ENCODE measurements at regions of chr13 and their contacts with region 1.

Region 1: GRCh38 chr13:28297341-28297740 is 159.0 kb downstream of the PAN3 start:
- DNase-seq: no peak
- ATAC-seq: no peak
- H3K4me3 ChIP-seq: no peak overlapping the region
- H3K27ac ChIP-seq: no peak overlapping the region
- H3K4me1 ChIP-seq: no peaks in the 10 kb centered on the region
- H3K27me3 ChIP-seq: no peaks in the 10 kb centered on the region
- CTCF ChIP-seq: no peak
- EP300 ChIP-seq: no peak
- POLR2A ChIP-seq: no peak
- RAD21 ChIP-seq: no peak

Region 2: GRCh38 chr13:28273919-28274318 is 23.4 kb before region 1 on chr13:
- CTCF ChIA-PET with region 1: no interaction called
- POLR2A ChIA-PET with region 1: no interaction called
- RAD21 ChIA-PET with region 1: no interaction called
- SMC1A ChIA-PET with region 1: interaction called, 10 read pairs
- in situ Hi-C with region 1: no loop called
- intact Hi-C with region 1: no loop called
- DNase-seq: no peak
- ATAC-seq: no peak
- H3K4me3 ChIP-seq: no peak overlapping the region
- H3K27ac ChIP-seq: no peak overlapping the region
- H3K4me1 ChIP-seq: peaks cover 7% of the 10 kb centered on the region; the same call in 1 of the 2 replicates
- H3K27me3 ChIP-seq: no peaks in the 10 kb centered on the region
- CTCF ChIP-seq: 0 out of 6 replicates have a peak, but pooled peaks of 2 of the 3 experiments have one; percentile 10
- EP300 ChIP-seq: no peak
- POLR2A ChIP-seq: no peak
- RAD21 ChIP-seq: peak; percentile 47

Region 3: GRCh38 chr13:28376604-28377003 is 79.3 kb after region 1 on chr13:
- CTCF ChIA-PET with region 1: no interaction called
- POLR2A ChIA-PET with region 1: no interaction called
- RAD21 ChIA-PET with region 1: no interaction called
- SMC1A ChIA-PET with region 1: no interaction called
- in situ Hi-C with region 1: no loop called
- intact Hi-C with region 1: no loop called
- DNase-seq: no peak
- ATAC-seq: no peak
- H3K4me3 ChIP-seq: no peak overlapping the region
- H3K27ac ChIP-seq: no peak overlapping the region
- H3K4me1 ChIP-seq: no peaks in the 10 kb centered on the region
- H3K27me3 ChIP-seq: no peaks in the 10 kb centered on the region
- CTCF ChIP-seq: 0 out of 6 replicates have a peak, but pooled peaks of 2 of the 3 experiments have one; percentile 4 to 7
- EP300 ChIP-seq: no peak
- POLR2A ChIP-seq: no peak
- RAD21 ChIP-seq: peak; percentile 17; the same call in 1 of the 2 replicates

Measured in GM12878 (cell line).